AG04449 (cell line): ENCODE measurements at regions of chr19 and their contacts with region 1.

Region 1: DNA sequence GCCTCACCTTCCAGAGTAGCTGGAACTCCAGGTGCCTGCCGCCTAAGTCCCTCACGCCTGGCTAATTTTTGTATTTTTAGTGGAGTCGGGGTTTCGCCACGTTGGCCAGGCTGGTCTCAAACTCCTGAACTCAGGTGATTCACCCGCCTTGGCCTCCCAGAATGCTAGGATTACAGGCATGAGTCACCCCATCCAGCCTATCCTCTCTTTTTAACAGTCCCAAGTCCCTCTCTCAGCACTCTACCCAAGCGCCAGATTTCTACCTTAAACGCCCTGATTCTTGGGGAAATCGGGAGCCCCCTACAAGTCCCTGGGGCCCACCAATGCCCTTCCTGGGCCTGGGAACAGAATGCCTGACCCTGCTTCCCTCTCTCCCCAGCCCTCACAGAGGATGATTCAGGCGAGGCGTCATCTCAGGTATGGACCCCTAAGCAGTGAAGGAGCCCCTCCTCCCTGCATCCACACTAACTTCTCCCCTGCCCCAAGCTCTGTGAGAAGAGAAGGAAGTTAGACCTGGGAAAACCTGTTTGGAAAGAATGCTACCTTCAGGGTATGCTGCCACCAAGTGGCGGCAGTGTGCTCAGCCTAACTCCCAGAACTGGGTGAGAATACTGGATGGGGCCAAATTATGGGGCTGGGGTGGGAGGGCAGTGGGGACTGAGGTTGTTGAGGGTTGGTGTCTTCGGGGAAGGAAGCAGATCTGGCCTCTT is 20.8 kb upstream of the EBI3 start:
- DNase-seq: no peak
- H3K4me3 ChIP-seq: no peak overlapping the region
- CTCF ChIP-seq: peak; percentile 64

Region 2: GRCh38 chr19:4083677-4084546 is 124.6 kb before region 1 on chr19:
- CTCF ChIA-PET with region 1: no interaction called
- POLR2A ChIA-PET with region 1: no interaction called
- DNase-seq: no peak
- H3K4me3 ChIP-seq: no peak overlapping the region
- CTCF ChIP-seq: no peak

Region 3: GRCh38 chr19:4232958-4233853 is 24.7 kb after region 1 on chr19:
- CTCF ChIA-PET with region 1: interaction called, 24 read pairs
- POLR2A ChIA-PET with region 1: no interaction called
- DNase-seq: no peak
- H3K4me3 ChIP-seq: no peak overlapping the region
- CTCF ChIP-seq: peak; percentile 78

Region 4: DNA sequence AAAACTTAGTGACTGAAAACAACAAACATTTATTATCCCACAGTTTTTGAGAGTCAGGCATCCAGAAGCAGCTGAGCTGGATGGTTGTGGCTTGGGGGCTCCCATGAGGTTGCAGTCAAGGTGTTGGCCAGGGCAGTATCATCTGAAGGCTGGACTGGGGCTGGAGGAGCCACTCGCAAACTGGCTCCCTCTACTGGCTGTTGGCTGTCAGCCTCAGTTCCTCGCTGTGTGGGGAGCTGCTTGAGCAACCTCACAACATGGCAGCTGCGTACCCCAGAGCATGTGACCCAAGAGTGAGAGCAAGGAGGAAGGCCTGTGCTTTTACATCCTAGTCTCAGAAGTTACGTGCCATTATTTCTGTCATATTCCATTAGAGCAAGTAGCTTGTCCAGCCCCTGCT is 48.0 kb after region 1 on chr19:
- CTCF ChIA-PET with region 1: no interaction called
- POLR2A ChIA-PET with region 1: no interaction called
- DNase-seq: no peak
- H3K4me3 ChIP-seq: no peak overlapping the region
- CTCF ChIP-seq: no peak